B cell (primary cell): ENCODE measurements at regions of chr5 and their contacts with region 1.

Region 1: DNA sequence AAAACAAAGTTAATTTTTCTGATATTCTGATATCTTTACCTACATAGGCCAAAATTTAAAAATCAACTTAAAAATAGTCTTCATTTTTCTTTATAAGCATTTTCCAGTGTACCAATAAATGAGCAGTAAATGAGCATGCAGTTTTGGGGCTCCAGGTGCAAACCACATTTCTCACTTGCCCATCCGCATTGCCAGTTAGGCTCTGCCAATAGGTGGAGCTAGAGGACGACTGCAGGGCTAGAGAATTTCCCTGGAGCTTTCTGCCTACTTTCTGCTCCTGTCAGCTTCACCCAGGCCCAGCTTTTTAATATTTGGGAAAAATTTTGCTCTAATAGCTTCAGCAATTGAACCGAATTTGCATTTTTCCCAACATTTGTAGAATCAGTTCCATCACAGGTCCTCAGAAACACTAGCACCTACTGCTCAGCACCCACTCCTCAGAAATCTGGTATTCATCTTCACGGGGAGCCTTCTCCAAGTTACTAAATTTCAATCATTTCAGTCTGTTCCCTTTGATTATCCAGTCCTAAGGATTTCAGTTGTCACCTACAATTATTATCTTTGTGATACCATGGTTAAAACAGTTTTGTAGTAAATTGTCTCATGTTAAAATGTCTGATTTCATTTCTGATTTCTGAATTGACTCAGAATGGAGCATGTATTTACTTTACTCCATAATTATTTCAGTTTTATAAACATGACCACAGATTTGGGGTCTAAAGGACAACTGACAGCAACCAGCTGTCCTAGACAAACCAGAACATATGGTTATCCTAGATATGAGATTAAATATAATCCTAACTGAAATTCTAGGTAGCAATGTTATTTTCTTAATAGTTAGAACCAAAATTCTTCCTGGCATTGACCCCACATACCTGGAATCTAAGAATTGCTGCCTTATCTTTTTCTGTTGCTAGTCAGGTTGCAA is 104.6 kb upstream of the FAM174A start:
- DNase-seq: peak; percentile 44
- ATAC-seq: peak; percentile 21
- H3K4me3 ChIP-seq: no peak overlapping the region
- H3K4me3 Mint-ChIP-seq: no peak overlapping the region
- H3K27ac ChIP-seq: no peak overlapping the region
- H3K27ac Mint-ChIP-seq: no peak overlapping the region
- H3K4me1 ChIP-seq: no peaks in the 10 kb centered on the region
- H3K4me1 Mint-ChIP-seq: no peaks in the 10 kb centered on the region
- H3K27me3 ChIP-seq: no peaks in the 10 kb centered on the region
- H3K27me3 Mint-ChIP-seq: no peaks in the 10 kb centered on the region
- CTCF ChIP-seq: peak; percentile 95

Region 2: GRCh38 chr5:101045689-101046088 is 615.2 kb after region 1 on chr5:
- CTCF ChIA-PET with region 1: interaction called, 16 read pairs
- POLR2A ChIA-PET with region 1: no interaction called
- intact Hi-C with region 1: loop called (anchors 1 kb)
- DNase-seq: peak; percentile 47
- ATAC-seq: no peak
- H3K4me3 ChIP-seq: no peak overlapping the region
- H3K4me3 Mint-ChIP-seq: no peak overlapping the region
- H3K27ac ChIP-seq: no peak overlapping the region
- H3K27ac Mint-ChIP-seq: no peak overlapping the region
- H3K4me1 ChIP-seq: no peaks in the 10 kb centered on the region
- H3K4me1 Mint-ChIP-seq: no peaks in the 10 kb centered on the region
- H3K27me3 ChIP-seq: no peaks in the 10 kb centered on the region
- H3K27me3 Mint-ChIP-seq: no peaks in the 10 kb centered on the region
- CTCF ChIP-seq: peak; percentile 72

Region 3: DNA sequence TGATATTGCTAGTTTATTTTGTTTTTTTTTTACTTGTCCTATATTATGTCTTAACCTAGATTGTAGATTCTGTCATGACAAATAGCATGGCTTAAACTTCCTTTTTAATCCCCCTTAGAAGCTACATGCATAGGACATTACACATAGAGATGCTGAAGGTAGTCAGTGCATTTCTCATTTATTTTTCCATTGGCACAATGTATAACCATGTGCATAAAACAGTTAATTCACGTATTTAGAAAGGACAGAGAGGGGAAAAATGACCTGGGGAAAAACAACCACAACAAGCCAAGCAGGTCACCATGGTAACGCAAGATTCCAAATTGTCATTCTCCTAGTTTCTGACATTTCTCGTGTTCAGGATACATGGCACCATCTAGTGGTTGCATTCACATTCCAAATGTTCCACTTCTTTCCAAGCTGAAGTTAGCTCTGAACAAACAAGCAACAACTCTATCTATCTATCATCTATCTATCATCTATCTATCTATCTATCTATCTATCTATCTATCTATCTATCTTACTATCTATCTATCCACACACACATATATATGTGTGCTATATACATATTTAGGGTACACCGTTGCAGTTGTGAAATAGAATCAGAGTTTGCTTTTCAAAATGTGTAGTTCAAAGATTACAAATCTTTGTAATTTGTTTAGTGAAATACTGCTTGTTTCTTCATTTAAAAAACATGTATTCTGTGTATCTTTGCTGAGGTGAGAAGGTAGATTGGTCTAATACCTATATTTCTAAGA is 959.8 kb after region 1 on chr5:
- CTCF ChIA-PET with region 1: interaction called, 12 read pairs
- POLR2A ChIA-PET with region 1: no interaction called
- intact Hi-C with region 1: loop called (anchors 1 kb)
- DNase-seq: peak; percentile 24
- ATAC-seq: no peak
- H3K4me3 ChIP-seq: no peak overlapping the region
- H3K4me3 Mint-ChIP-seq: no peak overlapping the region
- H3K27ac ChIP-seq: no peak overlapping the region
- H3K27ac Mint-ChIP-seq: no peak overlapping the region
- H3K4me1 ChIP-seq: no peaks in the 10 kb centered on the region
- H3K4me1 Mint-ChIP-seq: no peaks in the 10 kb centered on the region
- H3K27me3 ChIP-seq: no peaks in the 10 kb centered on the region
- H3K27me3 Mint-ChIP-seq: no peaks in the 10 kb centered on the region
- CTCF ChIP-seq: peak; percentile 41

Region 4: GRCh38 chr5:101678481-101679193 is 1248.1 kb after region 1 on chr5:
- CTCF ChIA-PET with region 1: interaction called, 12 read pairs
- POLR2A ChIA-PET with region 1: no interaction called
- intact Hi-C with region 1: loop called (anchors 1 kb)
- DNase-seq: peak; percentile 35
- ATAC-seq: peak; percentile 41
- H3K4me3 ChIP-seq: no peak overlapping the region
- H3K4me3 Mint-ChIP-seq: no peak overlapping the region
- H3K27ac ChIP-seq: no peak overlapping the region
- H3K27ac Mint-ChIP-seq: no peak overlapping the region
- H3K4me1 ChIP-seq: no peaks in the 10 kb centered on the region
- H3K4me1 Mint-ChIP-seq: no peaks in the 10 kb centered on the region
- H3K27me3 ChIP-seq: no peaks in the 10 kb centered on the region
- H3K27me3 Mint-ChIP-seq: peaks cover 2% of the 10 kb centered on the region
- CTCF ChIP-seq: peak; percentile 82

Region 5: GRCh38 chr5:101977729-101978345 is 1547.3 kb after region 1 on chr5:
- CTCF ChIA-PET with region 1: interaction called, 3 read pairs
- POLR2A ChIA-PET with region 1: no interaction called
- intact Hi-C with region 1: loop called (anchors 5 kb)
- DNase-seq: peak; percentile 18
- ATAC-seq: no peak
- H3K4me3 ChIP-seq: no peak overlapping the region
- H3K4me3 Mint-ChIP-seq: no peak overlapping the region
- H3K27ac ChIP-seq: no peak overlapping the region
- H3K27ac Mint-ChIP-seq: no peak overlapping the region
- H3K4me1 ChIP-seq: no peaks in the 10 kb centered on the region
- H3K4me1 Mint-ChIP-seq: no peaks in the 10 kb centered on the region
- H3K27me3 ChIP-seq: no peaks in the 10 kb centered on the region
- H3K27me3 Mint-ChIP-seq: no peaks in the 10 kb centered on the region
- CTCF ChIP-seq: peak; percentile 72

Region 6: DNA sequence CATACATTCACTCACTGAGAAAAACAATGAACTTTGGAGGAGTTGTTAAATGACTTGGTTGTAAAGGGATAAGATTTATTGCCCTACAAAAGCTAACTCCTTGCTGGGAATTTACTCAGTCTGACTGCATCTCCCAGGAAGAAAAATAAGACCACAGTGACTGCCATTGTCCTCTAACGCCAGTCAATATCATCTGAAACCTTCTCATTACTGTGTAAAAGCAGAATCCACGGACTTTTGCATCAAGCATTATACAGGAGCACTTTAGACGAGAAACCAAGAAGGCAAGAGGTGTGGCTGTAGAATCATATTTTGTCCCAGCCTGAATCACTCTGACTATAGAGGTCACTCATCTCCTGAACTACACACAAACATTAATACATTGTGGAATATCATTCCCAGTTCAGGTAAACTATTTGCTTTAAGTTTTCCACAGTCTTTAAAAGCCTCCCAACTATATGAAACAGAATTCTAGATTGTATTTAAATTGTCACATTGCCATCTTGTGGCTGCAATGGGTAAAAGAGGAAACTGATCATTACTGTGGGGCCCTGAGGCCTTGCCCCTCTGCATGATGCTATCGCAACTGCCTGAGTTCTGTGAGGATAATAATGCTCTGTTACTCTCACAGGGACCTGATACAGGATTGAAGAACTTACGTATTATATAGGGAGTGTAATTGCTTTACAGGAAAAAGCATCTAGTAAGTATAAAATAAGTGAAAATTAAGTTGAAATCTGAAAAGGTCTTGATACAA is 1722.6 kb after region 1 on chr5:
- CTCF ChIA-PET with region 1: no interaction called
- POLR2A ChIA-PET with region 1: no interaction called
- intact Hi-C with region 1: loop called (anchors 2 kb)
- DNase-seq: peak; percentile 21
- ATAC-seq: peak; percentile 33
- H3K4me3 ChIP-seq: no peak overlapping the region
- H3K4me3 Mint-ChIP-seq: peak overlapping the region; percentile 61
- H3K27ac ChIP-seq: no peak overlapping the region
- H3K27ac Mint-ChIP-seq: no peak overlapping the region
- H3K4me1 ChIP-seq: no peaks in the 10 kb centered on the region
- H3K4me1 Mint-ChIP-seq: no peaks in the 10 kb centered on the region
- H3K27me3 ChIP-seq: no peaks in the 10 kb centered on the region
- H3K27me3 Mint-ChIP-seq: no peaks in the 10 kb centered on the region
- CTCF ChIP-seq: peak; percentile 68

Region 7: DNA sequence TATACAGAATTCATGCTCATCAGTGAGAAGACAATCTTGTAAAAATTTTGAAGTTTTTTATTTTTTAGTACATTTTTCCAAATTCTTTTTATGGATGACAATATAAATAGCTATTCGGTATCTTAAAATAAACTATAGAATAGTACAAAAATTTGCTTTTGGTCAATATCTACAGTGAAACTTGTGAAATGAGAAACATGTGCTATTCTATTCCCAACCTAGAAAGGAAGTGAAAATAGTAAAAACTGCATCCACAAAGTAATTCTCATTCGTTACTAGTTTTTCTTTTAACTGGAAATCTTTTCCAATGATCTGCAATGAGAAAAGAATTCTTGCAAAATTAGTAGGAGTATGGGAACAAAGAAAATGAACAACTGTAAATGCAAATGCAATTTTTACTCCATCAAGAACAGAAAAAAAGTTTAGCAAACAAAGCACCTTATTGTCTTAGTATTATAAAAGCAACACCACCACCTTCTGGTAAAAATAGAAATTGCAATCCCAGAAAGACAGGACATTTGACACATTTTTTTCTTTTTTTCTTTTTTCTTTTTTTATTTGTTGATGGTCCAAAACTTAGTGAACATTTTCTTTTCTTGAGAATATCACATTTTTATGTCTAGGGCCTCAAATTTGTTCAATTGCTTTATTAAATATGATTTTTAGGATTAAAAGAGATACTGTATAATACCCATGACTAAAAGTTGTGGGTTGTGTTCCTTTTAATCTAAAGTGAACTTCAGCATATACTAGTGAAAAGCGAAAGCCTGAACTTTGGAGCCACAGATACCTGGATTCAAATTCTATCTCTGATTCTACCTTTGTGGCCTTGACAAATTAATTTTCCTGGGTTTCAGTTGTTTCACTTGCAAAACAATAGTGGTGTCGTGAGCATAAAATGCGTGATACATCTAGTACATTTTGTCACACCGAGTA is 1793.3 kb after region 1 on chr5:
- CTCF ChIA-PET with region 1: no interaction called
- POLR2A ChIA-PET with region 1: no interaction called
- intact Hi-C with region 1: loop called (anchors 10 kb)
- DNase-seq: peak; percentile 41
- ATAC-seq: no peak
- H3K4me3 ChIP-seq: no peak overlapping the region
- H3K4me3 Mint-ChIP-seq: no peak overlapping the region
- H3K27ac ChIP-seq: no peak overlapping the region
- H3K27ac Mint-ChIP-seq: no peak overlapping the region
- H3K4me1 ChIP-seq: no peaks in the 10 kb centered on the region
- H3K4me1 Mint-ChIP-seq: no peaks in the 10 kb centered on the region
- H3K27me3 ChIP-seq: no peaks in the 10 kb centered on the region
- H3K27me3 Mint-ChIP-seq: peaks cover 5% of the 10 kb centered on the region
- CTCF ChIP-seq: peak; percentile 90